ENCODE measurements at regions of chr12 and their contacts with region 1.

Region 1: GRCh38 chr12:93089805-93090569 is 160.9 kb upstream of the EEA1 start:
- DNase-seq: no peak
- H3K4me3 Mint-ChIP-seq: no peak overlapping the region
- H3K27ac Mint-ChIP-seq: peak overlapping the region; percentile 42
- H3K4me1 Mint-ChIP-seq: peaks cover 23% of the 10 kb centered on the region
- H3K27me3 Mint-ChIP-seq: no peaks in the 10 kb centered on the region

Region 2: DNA sequence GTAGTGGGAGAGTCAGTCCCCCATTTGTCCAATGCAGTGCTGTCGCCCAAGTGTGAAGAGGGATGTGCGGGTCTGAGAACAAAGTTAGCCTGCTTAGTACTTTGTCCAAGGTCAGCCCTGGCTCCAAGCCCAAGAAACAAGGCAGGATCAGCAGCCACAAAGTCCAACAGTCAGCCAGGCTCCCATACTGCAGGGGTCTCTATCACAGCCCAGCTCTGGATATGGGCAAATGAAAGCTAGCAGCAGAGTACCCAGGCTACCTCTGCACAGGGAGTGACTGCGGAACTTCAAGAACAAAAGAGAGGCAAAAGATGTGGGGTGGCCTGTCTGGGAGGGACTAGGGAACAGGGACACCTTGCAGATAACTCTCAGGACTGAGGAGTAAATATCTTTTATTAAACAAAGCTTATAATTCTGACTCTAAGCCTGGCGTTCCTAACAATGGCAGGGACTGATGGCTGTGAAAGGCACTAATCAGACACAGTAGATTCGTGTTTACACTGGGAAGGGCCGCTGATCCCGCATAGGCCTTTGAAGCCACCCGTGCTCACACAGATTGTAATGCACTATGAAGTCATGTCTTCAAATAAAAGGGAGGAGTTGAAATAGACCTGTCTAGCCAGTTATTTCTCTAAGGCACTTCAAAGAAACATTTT is 69.9 kb before region 1 on chr12:
- intact Hi-C with region 1: no loop called
- DNase-seq: no peak
- H3K4me3 Mint-ChIP-seq: no peak overlapping the region
- H3K27ac Mint-ChIP-seq: no peak overlapping the region
- H3K4me1 Mint-ChIP-seq: no peaks in the 10 kb centered on the region
- H3K27me3 Mint-ChIP-seq: no peaks in the 10 kb centered on the region

Region 3: DNA sequence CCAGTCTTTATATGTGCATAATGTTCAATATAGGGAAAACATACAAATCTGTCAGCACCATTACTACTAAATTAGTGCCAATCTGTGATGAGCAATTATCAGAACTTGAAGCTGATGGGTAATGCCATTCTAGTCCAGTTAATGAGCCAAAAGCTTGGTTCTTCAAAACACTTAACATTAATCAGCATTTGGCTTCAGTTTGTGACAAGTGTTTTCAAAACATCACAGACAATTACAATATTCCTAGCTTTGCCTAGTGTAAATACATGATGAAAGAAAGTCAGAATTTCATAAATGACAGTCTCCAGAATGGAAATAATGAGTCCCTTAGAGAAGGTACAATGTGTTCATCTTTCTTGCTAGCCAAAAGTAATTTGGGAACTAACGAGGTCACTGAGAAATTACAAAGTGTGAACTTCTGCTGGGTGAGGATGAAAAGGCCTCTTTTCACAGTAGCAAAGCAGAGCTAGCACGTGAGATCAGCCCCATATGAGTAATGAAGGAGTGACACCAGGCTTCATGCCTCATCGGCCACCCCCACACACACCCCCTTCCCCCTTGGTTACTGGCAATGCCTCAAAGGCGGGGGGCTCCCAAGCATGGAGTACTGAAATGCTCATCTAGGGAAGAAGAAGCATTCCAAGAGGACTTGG is 19.7 kb after region 1 on chr12:
- intact Hi-C with region 1: loop called (anchors 2 kb)
- DNase-seq: no peak
- H3K4me3 Mint-ChIP-seq: no peak overlapping the region
- H3K27ac Mint-ChIP-seq: peak overlapping the region; percentile 80
- H3K4me1 Mint-ChIP-seq: no peaks in the 10 kb centered on the region
- H3K27me3 Mint-ChIP-seq: no peaks in the 10 kb centered on the region

Measured in activated T-helper 1 cell treated with anti-CD3 and anti-CD28 coated beads, Interleukin-12 subunit alpha, Interleukin-12 subunit beta, Interleukin-2, Interleukin-4 antibody, amounts not matched to agents 30 ng/mL and 10 ng/mL and 1 ng/mL, durations not matched to agents 14 hours and 24 hours and 36 hours (primary cell).